Activated CD8-positive, alpha-beta T cell treated with anti-CD3 and anti-CD28 coated beads, Interleukin-2, amount 10 ng/mL, durations not matched to agents 7 days and 5 days (primary cell): ENCODE measurements at regions of chr12 and their contacts with region 1.

Region 1: DNA sequence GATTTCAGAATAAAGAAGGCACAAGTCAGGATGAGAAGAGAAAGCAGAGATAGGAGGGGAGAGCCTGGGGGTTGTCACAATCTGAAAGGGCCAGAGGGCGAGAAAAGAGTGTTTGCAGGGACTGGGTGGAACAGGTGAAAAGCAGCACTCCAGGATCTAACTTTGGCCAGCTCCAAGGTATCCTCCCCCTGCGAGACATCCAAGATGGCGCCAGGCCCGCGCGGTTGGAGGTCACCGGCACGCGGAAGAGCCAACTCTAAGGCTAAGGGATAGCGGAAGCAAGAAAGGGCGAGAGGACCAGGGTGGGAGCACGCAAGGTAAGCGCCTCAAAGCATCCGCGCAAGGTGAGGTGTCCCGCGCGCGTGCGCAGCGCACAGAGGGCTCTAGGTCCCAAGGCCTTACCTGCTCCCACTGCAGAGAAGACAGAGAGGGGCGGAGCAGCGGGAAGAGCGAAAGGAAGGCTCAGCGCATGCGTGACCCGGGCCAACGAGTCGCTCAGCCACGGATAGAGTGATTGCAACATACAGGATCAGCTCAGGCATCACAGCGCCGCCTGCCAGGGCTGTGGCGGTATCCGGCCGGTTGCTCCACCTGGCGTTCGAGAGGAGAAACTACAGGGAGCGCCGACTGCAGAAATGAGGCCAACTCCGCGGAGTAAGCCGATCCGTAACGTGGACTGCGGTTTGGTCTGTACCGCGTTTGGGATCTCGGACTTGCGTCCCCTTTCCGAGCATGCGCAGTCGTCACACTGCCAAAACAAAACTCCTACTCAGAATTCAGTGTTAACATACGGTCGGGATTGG is at the start of gene ATP5MC2:
- DNase-seq: peak; percentile 98
- ATAC-seq: peak; percentile 95
- H3K4me3 Mint-ChIP-seq: peak within 1 kb of the TSS; percentile 88
- H3K27ac Mint-ChIP-seq: peak within 1 kb of the TSS; percentile 98
- H3K4me1 Mint-ChIP-seq: peaks cover 43% of the 10 kb centered on the region
- H3K27me3 Mint-ChIP-seq: peaks cover 27% of the 10 kb centered on the region
- total RNA-seq, gene ATP5MC2: 241 to 247 TPM

Region 2: GRCh38 chr12:53538196-53538689 is 137.6 kb before region 1 on chr12:
- CTCF ChIA-PET with region 1: interaction called, 122 read pairs
- POLR2A ChIA-PET with region 1: interaction called, 18 read pairs
- DNase-seq: no peak
- ATAC-seq: no peak
- H3K4me3 Mint-ChIP-seq: no peak overlapping the region
- H3K27ac Mint-ChIP-seq: no peak overlapping the region
- H3K4me1 Mint-ChIP-seq: no peaks in the 10 kb centered on the region
- H3K27me3 Mint-ChIP-seq: no peaks in the 10 kb centered on the region

Region 3: GRCh38 chr12:53551889-53552291 is 124.0 kb before region 1 on chr12:
- CTCF ChIA-PET with region 1: interaction called, 10 read pairs
- POLR2A ChIA-PET with region 1: no interaction called
- DNase-seq: no peak
- ATAC-seq: no peak
- H3K4me3 Mint-ChIP-seq: no peak overlapping the region
- H3K27ac Mint-ChIP-seq: no peak overlapping the region
- H3K4me1 Mint-ChIP-seq: peaks cover 4% of the 10 kb centered on the region
- H3K27me3 Mint-ChIP-seq: no peaks in the 10 kb centered on the region

Region 4: GRCh38 chr12:53613821-53614220 is 62.0 kb before region 1 on chr12:
- CTCF ChIA-PET with region 1: interaction called, 10 read pairs
- POLR2A ChIA-PET with region 1: no interaction called
- DNase-seq: no peak
- ATAC-seq: no peak
- H3K4me3 Mint-ChIP-seq: no peak overlapping the region
- H3K27ac Mint-ChIP-seq: no peak overlapping the region
- H3K4me1 Mint-ChIP-seq: peaks cover 31% of the 10 kb centered on the region
- H3K27me3 Mint-ChIP-seq: no peaks in the 10 kb centered on the region

Region 5: GRCh38 chr12:53664936-53665335 is 10.9 kb before region 1 on chr12:
- CTCF ChIA-PET with region 1: interaction called, 10 read pairs
- POLR2A ChIA-PET with region 1: interaction called, 7 read pairs
- DNase-seq: no peak
- ATAC-seq: no peak
- H3K4me3 Mint-ChIP-seq: no peak overlapping the region
- H3K27ac Mint-ChIP-seq: no peak overlapping the region
- H3K4me1 Mint-ChIP-seq: peaks cover 5% of the 10 kb centered on the region
- H3K27me3 Mint-ChIP-seq: no peaks in the 10 kb centered on the region

Region 6: DNA sequence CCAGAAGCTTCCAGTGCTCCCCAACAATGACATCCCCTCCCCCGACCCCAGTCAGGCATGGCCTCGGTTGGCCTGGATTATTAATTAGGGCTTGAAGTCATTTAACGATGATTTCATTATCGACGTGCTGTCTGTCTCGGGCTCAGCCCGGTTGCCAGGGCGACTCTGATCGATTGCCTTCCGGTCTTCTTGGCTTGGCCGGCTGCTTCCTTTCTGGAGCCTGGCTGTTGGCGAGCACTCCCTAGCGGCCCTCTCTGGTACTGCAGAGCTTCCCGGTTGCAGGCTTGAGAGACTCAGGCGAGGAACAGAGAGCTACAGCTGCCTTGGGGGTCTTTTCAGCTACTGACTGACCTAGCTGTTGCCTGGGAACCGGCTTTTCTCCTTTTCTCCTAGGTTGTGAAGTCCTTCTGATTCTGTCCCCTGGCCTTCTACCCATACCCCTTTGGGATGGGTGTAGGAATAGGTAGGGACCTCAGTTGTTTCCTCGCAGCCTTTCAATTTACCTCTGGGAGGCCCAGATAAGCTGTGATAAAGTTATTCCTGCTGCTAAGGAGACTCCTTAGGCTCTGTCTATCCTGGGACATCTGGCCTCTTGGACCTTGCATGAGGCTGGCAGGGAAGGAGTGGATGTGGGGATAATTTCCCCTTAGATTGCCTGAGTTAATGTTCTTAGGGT is 81.4 kb after region 1 on chr12:
- CTCF ChIA-PET with region 1: interaction called, 13 read pairs
- POLR2A ChIA-PET with region 1: interaction called, 3 read pairs
- DNase-seq: peak; percentile 91
- ATAC-seq: peak; percentile 83
- H3K4me3 Mint-ChIP-seq: peak overlapping the region; percentile 42
- H3K27ac Mint-ChIP-seq: peak overlapping the region; percentile 51
- H3K4me1 Mint-ChIP-seq: peaks cover 5% of the 10 kb centered on the region
- H3K27me3 Mint-ChIP-seq: peaks cover 36% of the 10 kb centered on the region